Dorsolateral prefrontal cortex (tissue), 120 donors: ENCODE measurements at regions of chr2 and their contacts with region 1.

Region 1: DNA sequence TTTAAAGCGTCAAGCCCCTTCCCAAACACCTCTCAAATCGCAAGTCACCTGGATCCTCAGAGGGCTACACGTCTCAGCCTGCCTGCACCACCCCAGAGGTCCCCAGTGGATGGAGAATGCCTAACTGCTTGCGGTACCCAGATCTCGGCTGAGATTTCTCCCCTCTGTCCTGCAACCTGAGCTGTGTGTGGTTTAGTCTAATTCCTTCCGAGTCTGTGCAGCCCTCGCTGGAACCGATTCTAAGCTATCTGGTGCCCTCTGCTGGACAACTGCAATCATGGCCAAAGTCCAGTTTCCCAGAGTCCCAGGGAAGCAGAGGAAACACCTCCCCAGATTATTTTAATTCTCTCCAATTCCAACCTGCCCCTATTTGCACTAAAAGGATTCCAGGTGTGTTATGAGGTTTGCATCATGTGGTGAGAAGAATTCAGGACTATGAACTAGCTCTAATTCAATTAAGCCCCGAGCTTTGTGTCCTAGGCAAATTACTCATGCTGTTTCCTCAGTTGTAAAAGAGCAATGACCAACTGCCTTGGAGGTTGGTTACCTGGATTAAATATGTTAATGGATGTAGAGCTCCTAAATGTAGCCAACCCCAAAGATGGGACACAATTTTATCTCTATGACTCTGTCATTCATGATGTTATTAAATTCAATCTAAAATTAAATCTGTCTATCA is 276.1 kb upstream of the NCKAP5 start:
- DNase-seq: peak; percentile 54 to 81 (median 64)
- H3K4me3 ChIP-seq: no peak overlapping the region
- H3K27ac ChIP-seq: no peak overlapping the region
- H3K27me3 ChIP-seq: no peaks in the 10 kb centered on the region
- CTCF ChIP-seq: peak; percentile 58 to 93 (median 85)

Region 2: GRCh38 chr2:132547074-132547687 is 1297.2 kb before region 1 on chr2:
- intact Hi-C with region 1: loop called (anchors 2 to 10 kb)
- DNase-seq: peak; percentile 46 to 89 (median 70)
- H3K4me3 ChIP-seq: no peak overlapping the region
- H3K27ac ChIP-seq: no peak overlapping the region
- H3K27me3 ChIP-seq: peaks cover 0 to 4% (median 0%) of the 10 kb centered on the region in 45 donors
- CTCF ChIP-seq: peak; percentile 73 to 92 (median 83)

Region 3: GRCh38 chr2:132651115-132652045 is 1193.0 kb before region 1 on chr2:
- intact Hi-C with region 1: loop called in 1 of 2 experiments (anchors 10 kb)
- DNase-seq: no peak
- H3K4me3 ChIP-seq: peak overlapping the region in 7 of 59 donors; percentile 9 to 43 (median 29)
- H3K27ac ChIP-seq: no peak overlapping the region
- H3K27me3 ChIP-seq: peaks cover 0 to 4% (median 0%) of the 10 kb centered on the region in 45 donors
- CTCF ChIP-seq: peak in 43 of 56 donors; percentile 38 to 87 (median 64)

Region 4: GRCh38 chr2:133266041-133266925 is 578.1 kb before region 1 on chr2:
- intact Hi-C with region 1: loop called in 1 of 2 experiments (anchors 10 kb)
- DNase-seq: peak in 2 of 10 donors; percentile 10 to 42
- H3K4me3 ChIP-seq: peak overlapping the region; percentile 20 to 75 (median 61)
- H3K27ac ChIP-seq: peak overlapping the region in 5 of 59 donors; percentile 27 to 60 (median 36)
- H3K27me3 ChIP-seq: peaks cover 0 to 6% (median 0%) of the 10 kb centered on the region in 45 donors
- CTCF ChIP-seq: peak in 1 of 56 donors; percentile 9

Region 5: DNA sequence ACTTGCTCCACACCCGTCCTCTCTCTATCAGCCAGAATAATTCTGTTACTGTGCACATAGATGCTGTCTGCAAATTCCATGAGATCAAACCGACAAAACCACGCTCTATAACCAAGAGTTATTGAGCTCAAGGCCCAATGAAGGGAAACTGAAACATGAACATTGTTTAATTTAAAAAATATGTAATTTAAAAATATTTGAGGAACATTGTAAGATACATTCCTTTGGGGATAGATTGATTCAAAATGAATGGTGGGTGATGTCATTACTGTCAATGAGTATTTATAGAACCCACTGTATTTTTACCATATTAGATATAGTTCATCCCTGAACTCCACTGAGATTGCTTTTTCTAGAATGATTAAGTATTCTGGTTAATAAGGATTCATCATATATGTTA is 326.5 kb before region 1 on chr2:
- intact Hi-C with region 1: no loop called
- DNase-seq: no peak
- H3K4me3 ChIP-seq: no peak overlapping the region
- H3K27ac ChIP-seq: no peak overlapping the region
- H3K27me3 ChIP-seq: peaks cover 0 to 4% (median 0%) of the 10 kb centered on the region in 45 donors
- CTCF ChIP-seq: no peak

Region 6: GRCh38 chr2:133936601-133937000 is 92.2 kb after region 1 on chr2:
- intact Hi-C with region 1: no loop called
- DNase-seq: no peak
- H3K4me3 ChIP-seq: no peak overlapping the region
- H3K27ac ChIP-seq: no peak overlapping the region
- H3K27me3 ChIP-seq: no peaks in the 10 kb centered on the region
- CTCF ChIP-seq: no peak